Endothelial cell of umbilical vein (primary cell): ENCODE measurements at regions of chr7 and their contacts with region 1.

Region 1: DNA sequence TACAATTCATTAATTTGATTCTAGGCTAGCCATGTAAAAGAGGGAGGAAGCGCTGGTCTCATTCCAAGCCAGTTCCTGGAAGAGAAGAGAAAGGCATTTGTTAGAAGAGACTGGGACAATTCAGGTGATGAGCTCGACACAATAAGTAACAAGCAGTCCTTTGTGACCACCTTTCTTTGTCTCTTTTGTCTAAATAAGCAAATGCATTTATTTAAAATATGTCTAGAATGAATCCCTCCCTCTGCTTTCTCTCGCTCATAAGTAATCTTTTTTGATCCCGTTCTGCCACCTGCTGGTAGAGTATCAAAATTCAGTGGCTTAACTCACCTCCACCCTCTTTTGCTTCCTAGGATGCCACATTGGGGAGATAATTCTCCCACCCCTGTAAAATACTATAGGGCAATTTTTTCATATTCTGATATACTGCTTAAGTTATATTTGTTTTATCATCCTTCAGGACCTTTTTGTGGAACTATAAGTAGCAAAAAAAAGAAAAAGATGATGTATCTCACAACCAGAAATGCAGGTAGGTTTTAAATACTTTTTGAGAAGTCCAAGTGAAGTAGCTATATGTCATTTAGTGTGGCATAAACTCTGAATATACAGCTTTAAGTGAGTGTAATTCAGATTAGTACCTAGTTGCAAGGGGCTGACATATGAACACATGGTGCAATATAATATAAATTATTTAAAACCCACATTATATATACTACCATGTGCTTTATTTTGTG is 91.5 kb downstream of the GSDME start:
- DNase-seq: peak; percentile 66
- H3K4me3 ChIP-seq: no peak overlapping the region
- H3K27ac ChIP-seq: no peak overlapping the region
- H3K4me1 ChIP-seq: peaks cover 25% of the 10 kb centered on the region
- H3K27me3 ChIP-seq: no peaks in the 10 kb centered on the region
- CTCF ChIP-seq: peak; percentile 48 to 56
- POLR2A ChIP-seq: no peak

Region 2: DNA sequence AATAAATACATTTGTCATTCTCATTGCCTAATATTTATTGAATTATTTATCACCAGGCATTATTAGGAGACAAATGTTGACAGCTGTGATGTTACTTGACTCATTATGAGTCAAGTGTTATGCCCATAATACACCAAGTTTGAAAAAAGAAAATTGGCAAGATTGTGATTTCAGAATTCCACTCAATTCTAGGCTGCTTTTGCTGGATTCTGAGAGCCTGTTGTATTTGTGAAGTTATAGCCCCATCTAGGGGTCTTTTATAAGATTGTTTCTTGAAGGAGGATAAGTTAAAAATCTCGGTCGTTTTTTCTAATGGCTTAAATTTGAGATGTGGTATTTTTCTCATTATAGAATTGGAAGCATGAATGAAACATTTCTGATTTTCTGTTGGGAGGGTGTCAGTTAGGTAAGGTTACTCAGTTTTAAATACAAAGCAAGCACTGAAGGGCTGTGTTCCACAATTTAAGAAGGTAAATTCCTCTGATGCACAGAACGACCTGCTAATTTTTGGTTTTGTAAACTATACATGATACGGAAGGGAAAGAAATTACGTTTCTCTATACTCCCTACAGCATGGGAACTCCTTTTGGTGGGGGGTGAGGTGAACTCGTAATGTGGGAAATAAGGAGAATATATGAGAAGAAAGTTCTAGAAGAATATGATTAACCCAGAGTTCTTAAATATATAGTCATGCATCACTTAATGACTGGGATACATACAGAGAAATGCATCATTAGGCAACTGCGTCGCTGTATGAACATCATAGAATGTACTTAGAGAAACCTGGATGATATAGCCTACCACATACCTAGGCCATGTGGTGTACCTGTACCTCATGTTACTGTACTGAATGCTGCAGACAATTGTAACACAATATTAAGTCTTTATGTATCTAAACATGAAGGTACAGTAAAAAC is 953.1 kb before region 1 on chr7:
- CTCF ChIA-PET with region 1: no interaction called
- POLR2A ChIA-PET with region 1: no interaction called
- dilution Hi-C with region 1: no loop called
- intact Hi-C with region 1: loop called (anchors 5 kb)
- DNase-seq: peak; percentile 58
- H3K4me3 ChIP-seq: no peak overlapping the region
- H3K27ac ChIP-seq: no peak overlapping the region
- H3K4me1 ChIP-seq: no peaks in the 10 kb centered on the region
- H3K27me3 ChIP-seq: no peaks in the 10 kb centered on the region
- CTCF ChIP-seq: peak; percentile 20 to 40
- POLR2A ChIP-seq: no peak

Region 3: GRCh38 chr7:23938937-23939552 is 726.7 kb before region 1 on chr7:
- CTCF ChIA-PET with region 1: interaction called, 4 read pairs
- POLR2A ChIA-PET with region 1: no interaction called
- dilution Hi-C with region 1: no loop called
- intact Hi-C with region 1: loop called (anchors 10 kb)
- DNase-seq: no peak
- H3K4me3 ChIP-seq: no peak overlapping the region
- H3K27ac ChIP-seq: no peak overlapping the region
- H3K4me1 ChIP-seq: no peaks in the 10 kb centered on the region
- H3K27me3 ChIP-seq: no peaks in the 10 kb centered on the region
- CTCF ChIP-seq: no peak
- POLR2A ChIP-seq: no peak

Region 4: DNA sequence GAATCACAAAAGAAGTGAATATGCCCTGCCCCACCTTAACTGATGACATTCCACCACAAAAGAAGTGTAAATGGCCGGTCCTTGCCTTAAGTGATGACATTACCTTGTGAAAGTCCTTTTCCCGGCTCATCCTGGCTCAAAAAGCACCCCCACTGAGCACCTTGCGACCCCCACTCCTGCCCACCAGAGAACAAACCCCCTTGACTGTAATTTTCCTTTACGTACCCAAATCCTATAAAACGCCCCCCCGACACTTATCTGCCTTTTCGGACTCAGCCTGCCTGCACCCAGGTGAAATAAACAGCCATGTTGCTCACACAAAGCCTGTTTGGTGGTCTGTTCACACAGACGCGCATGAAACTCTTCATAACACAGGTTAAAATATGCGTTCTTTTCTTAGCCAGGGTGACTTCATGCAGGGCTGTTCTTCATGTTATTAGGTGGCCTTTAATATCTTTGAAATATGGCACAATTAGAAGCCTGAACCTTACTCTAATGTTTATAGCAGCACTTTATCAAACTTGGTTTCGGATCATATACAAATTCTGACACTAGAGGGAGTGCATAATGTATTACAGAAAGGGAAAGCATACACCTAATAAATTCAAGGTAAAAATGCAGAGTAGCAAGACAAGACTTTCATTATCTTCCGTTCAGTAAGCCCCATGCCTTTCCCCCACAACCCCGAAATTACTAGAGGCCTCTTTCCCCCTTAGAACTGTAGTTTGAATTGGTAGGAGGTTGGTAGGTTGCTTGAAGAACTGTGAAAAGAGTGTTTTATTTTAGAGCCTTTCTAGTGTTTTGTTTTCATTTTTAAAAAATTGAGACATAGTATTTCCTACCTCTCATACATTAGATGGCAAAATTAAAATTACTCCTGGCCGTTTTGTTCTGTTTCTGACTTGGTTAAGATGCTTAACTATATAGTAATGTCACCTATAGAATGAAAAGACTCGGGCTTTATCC is 263.8 kb before region 1 on chr7:
- CTCF ChIA-PET with region 1: interaction called, 16 read pairs
- POLR2A ChIA-PET with region 1: no interaction called
- dilution Hi-C with region 1: no loop called
- intact Hi-C with region 1: loop called (anchors 1 kb)
- DNase-seq: peak; percentile 51
- H3K4me3 ChIP-seq: no peak overlapping the region
- H3K27ac ChIP-seq: no peak overlapping the region
- H3K4me1 ChIP-seq: no peaks in the 10 kb centered on the region
- H3K27me3 ChIP-seq: no peaks in the 10 kb centered on the region
- CTCF ChIP-seq: peak; percentile 9 to 37
- POLR2A ChIP-seq: no peak